Left cardiac atrium (tissue), 4 donors: ENCODE measurements at regions of chr18 and their contacts with region 1.

Region 1: GRCh38 chr18:58955738-58956137 is 91.1 kb downstream of the ZNF532 start:
- DNase-seq: peak; percentile 31
- ATAC-seq: peak; percentile 78 to 86

Region 2: DNA sequence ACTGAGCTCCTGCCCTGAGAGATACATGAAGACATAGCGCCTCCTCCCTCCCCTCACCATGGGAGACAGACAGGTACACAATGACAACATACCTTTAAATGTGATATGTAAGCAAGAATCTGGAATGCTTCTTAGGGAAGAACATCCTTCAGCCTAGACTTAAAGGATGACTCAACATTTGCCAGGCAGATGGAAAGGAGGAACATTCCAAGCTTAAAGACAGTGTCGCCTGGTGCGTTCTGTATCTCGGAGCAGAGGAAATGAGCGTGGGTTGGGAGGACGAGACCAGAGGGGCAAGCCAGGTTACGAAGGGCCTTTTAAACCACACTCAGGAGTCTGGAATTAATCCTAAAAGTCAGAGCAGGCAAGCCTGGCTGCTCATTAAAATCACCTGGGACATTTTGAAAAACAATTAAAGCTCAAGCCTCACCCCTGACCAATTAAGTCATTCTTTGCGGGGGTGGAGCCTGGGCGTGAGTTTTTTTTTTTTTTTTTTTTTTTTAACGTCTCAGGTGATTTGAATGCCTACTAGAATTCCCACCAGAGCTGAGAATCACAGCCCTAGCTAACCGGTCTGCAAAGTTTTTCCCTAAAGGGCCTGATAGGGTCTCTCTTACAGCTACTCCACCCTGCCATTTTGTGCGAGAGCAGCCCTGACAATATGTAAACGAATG is 52.7 kb after region 1 on chr18:
- intact Hi-C with region 1: no loop called
- DNase-seq: no peak
- ATAC-seq: peak in 1 of 2 donors; percentile 52

Region 3: GRCh38 chr18:59056706-59057492 is 101.2 kb after region 1 on chr18:
- intact Hi-C with region 1: loop called in 1 of 2 experiments (anchors 5 kb)
- DNase-seq: peak; percentile 77
- ATAC-seq: peak; percentile 56 to 73

Region 4: GRCh38 chr18:59085797-59086196 is 130.1 kb after region 1 on chr18:
- intact Hi-C with region 1: no loop called
- DNase-seq: no peak
- ATAC-seq: peak in 1 of 2 donors; percentile 35